ENCODE measurements at regions of chr7 and their contacts with region 1.

Region 1: GRCh38 chr7:104983578-104984539 is 30.1 kb upstream of the KMT2E start:
- DNase-seq: peak; percentile 86
- H3K4me3 ChIP-seq: peak overlapping the region; percentile 53 to 74 (median 54)
- H3K27ac ChIP-seq: peak overlapping the region; percentile 99
- H3K4me1 ChIP-seq: peaks cover 52% of the 10 kb centered on the region
- H3K27me3 ChIP-seq: no peaks in the 10 kb centered on the region
- CTCF ChIP-seq: peak; percentile 3 to 59

Region 2: GRCh38 chr7:104664653-104665052 is 319.2 kb before region 1 on chr7:
- CTCF ChIA-PET with region 1: no interaction called
- dilution Hi-C with region 1: no loop called
- in situ Hi-C with region 1: no loop called
- intact Hi-C with region 1: no loop called
- DNase-seq: no peak
- H3K4me3 ChIP-seq: no peak overlapping the region
- H3K27ac ChIP-seq: no peak overlapping the region
- H3K4me1 ChIP-seq: no peaks in the 10 kb centered on the region
- H3K27me3 ChIP-seq: no peaks in the 10 kb centered on the region
- CTCF ChIP-seq: no peak

Region 3: DNA sequence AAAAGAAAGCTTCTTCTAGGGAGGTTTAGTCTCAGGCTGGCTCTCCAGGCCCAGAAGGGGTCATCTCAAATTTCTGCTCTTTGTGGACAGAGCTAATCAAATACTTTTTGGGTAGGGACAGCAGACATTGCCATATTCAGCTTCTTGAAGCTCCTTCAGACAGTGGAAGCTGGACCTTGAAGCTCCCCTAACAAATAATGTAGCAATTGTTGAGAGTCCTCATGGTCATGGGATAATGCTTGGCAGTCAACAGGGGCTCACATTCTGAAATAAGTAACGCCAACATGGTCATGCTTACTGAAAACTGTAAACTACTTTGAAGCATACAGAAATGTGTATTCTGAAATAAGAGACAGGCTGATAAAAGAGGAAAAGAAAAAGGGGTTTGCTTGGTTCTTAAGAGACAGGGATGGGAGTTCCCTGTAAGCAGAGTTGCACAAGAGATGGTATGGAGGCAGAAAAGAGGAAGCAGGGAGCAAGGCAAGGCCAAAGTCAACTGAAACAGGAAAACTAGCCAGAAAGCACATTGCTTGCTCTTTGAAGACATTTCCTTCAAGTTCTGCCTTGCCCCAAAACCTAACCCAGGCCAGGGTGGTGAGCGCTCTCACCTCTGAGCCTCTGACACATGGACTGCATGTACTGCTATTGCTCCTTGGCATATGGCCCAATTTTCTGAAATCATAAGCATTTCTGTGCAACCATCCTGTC is 23.0 kb before region 1 on chr7:
- CTCF ChIA-PET with region 1: no interaction called
- dilution Hi-C with region 1: no loop called
- in situ Hi-C with region 1: no loop called
- intact Hi-C with region 1: no loop called
- DNase-seq: peak; percentile 83
- H3K4me3 ChIP-seq: no peak overlapping the region
- H3K27ac ChIP-seq: peak overlapping the region; percentile 16
- H3K4me1 ChIP-seq: peaks cover 53% of the 10 kb centered on the region
- H3K27me3 ChIP-seq: no peaks in the 10 kb centered on the region
- CTCF ChIP-seq: no peak

Region 4: DNA sequence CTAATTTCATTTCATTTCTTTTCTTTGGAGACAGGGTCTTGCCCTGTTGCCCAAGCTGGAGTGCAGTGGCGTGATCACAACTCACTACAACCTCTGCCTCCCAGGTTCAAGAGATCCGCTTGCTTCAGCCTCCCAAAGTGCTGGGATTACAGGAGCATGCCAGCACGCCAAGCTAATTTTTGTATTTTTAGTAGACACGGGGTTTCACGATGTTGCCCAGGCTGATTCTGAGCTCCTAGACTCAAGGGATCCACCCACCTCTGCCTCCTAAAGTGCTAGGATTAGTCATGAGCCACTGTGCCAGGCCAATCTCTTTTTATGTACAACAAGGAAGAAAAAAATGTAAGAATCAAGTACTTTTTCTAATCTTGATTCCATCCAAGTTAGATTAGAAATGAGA is 19.4 kb after region 1 on chr7:
- CTCF ChIA-PET with region 1: no interaction called
- dilution Hi-C with region 1: no loop called
- in situ Hi-C with region 1: no loop called
- intact Hi-C with region 1: loop called (anchors 2 kb)
- DNase-seq: peak; percentile 76
- H3K4me3 ChIP-seq: peak overlapping the region; percentile 4 to 28 (median 9)
- H3K27ac ChIP-seq: peak overlapping the region; percentile 55
- H3K4me1 ChIP-seq: peaks cover 37% of the 10 kb centered on the region
- H3K27me3 ChIP-seq: no peaks in the 10 kb centered on the region
- CTCF ChIP-seq: no peak

Region 5: GRCh38 chr7:105046414-105046813 is 62.6 kb after region 1 on chr7:
- CTCF ChIA-PET with region 1: no interaction called
- dilution Hi-C with region 1: no loop called
- in situ Hi-C with region 1: no loop called
- intact Hi-C with region 1: loop called (anchors 1 kb)
- DNase-seq: peak; percentile 27
- H3K4me3 ChIP-seq: no peak overlapping the region
- H3K27ac ChIP-seq: no peak overlapping the region
- H3K4me1 ChIP-seq: peaks cover 8% of the 10 kb centered on the region
- H3K27me3 ChIP-seq: no peaks in the 10 kb centered on the region
- CTCF ChIP-seq: no peak

Region 6: GRCh38 chr7:105067691-105068090 is 83.8 kb after region 1 on chr7:
- CTCF ChIA-PET with region 1: no interaction called
- dilution Hi-C with region 1: no loop called
- in situ Hi-C with region 1: no loop called
- intact Hi-C with region 1: loop called (anchors 1 kb)
- DNase-seq: no peak
- H3K4me3 ChIP-seq: no peak overlapping the region
- H3K27ac ChIP-seq: no peak overlapping the region
- H3K4me1 ChIP-seq: peaks cover 4% of the 10 kb centered on the region
- H3K27me3 ChIP-seq: no peaks in the 10 kb centered on the region
- CTCF ChIP-seq: no peak

Region 7: GRCh38 chr7:105439174-105439893 is 455.5 kb after region 1 on chr7:
- CTCF ChIA-PET with region 1: interaction called, 4 read pairs
- dilution Hi-C with region 1: no loop called
- in situ Hi-C with region 1: no loop called
- intact Hi-C with region 1: loop called (anchors 5 kb)
- DNase-seq: peak; percentile 95
- H3K4me3 ChIP-seq: peak overlapping the region; percentile 17 to 23 (median 17)
- H3K27ac ChIP-seq: peak overlapping the region; percentile 88
- H3K4me1 ChIP-seq: peaks cover 21% of the 10 kb centered on the region
- H3K27me3 ChIP-seq: no peaks in the 10 kb centered on the region
- CTCF ChIP-seq: peak in 1 of 2 donors; percentile 15